BJ (cell line): ENCODE measurements at regions of chr9 and their contacts with region 1.

Region 1: GRCh38 chr9:105621001-105621400 is 41.3 kb upstream of the TAL2 start:
- DNase-seq: no peak
- H3K4me3 ChIP-seq: no peak overlapping the region
- H3K27me3 ChIP-seq: no peaks in the 10 kb centered on the region
- CTCF ChIP-seq: no peak

Region 2: DNA sequence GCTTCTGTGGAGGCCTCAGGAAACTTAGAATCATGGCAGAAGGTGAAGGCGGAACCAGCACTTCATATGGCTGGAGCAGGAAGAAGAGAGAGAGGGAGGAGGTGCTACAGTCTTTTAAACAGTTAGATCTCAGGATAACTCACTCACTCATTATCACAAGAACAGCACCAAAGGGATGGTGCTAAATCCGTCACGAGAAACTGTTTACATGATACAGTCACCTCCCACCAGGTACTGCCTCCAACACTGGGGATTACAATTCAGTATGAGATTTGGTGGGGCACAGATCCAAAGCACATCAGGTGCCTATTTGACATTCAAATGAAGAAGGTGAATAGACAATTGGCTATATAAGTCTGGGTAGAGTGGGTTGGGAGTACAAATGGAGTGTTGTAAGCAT is 27.9 kb before region 1 on chr9:
- CTCF ChIA-PET with region 1: no interaction called
- POLR2A ChIA-PET with region 1: no interaction called
- DNase-seq: no peak
- H3K4me3 ChIP-seq: no peak overlapping the region
- H3K27me3 ChIP-seq: no peaks in the 10 kb centered on the region
- CTCF ChIP-seq: no peak

Region 3: GRCh38 chr9:105662193-105663075 is 41.4 kb after region 1 on chr9 and contains the start of gene TAL2:
- CTCF ChIA-PET with region 1: no interaction called
- POLR2A ChIA-PET with region 1: no interaction called
- DNase-seq: no peak
- H3K4me3 ChIP-seq: no peak within 1 kb of the TSS
- H3K27me3 ChIP-seq: no peaks in the 10 kb centered on the region
- CTCF ChIP-seq: no peak
- polyA plus RNA-seq, gene TAL2: 0.13 TPM in 2 replicates

Region 4: GRCh38 chr9:105712773-105713172 is 91.8 kb after region 1 on chr9:
- CTCF ChIA-PET with region 1: interaction called, 10 read pairs
- POLR2A ChIA-PET with region 1: no interaction called
- DNase-seq: no peak
- H3K4me3 ChIP-seq: no peak overlapping the region
- H3K27me3 ChIP-seq: no peaks in the 10 kb centered on the region
- CTCF ChIP-seq: no peak

Region 5: GRCh38 chr9:105725370-105725769 is 104.4 kb after region 1 on chr9:
- CTCF ChIA-PET with region 1: no interaction called
- POLR2A ChIA-PET with region 1: no interaction called
- DNase-seq: no peak
- H3K4me3 ChIP-seq: no peak overlapping the region
- H3K27me3 ChIP-seq: no peaks in the 10 kb centered on the region
- CTCF ChIP-seq: no peak